ENCODE measurements at regions of chr20 and their contacts with region 1.

Region 1: GRCh38 chr20:49510562-49511122 is 28.2 kb upstream of the KCNB1 start:
- DNase-seq: no peak
- CTCF ChIP-seq: no peak

Region 2: GRCh38 chr20:49338061-49338460 is 172.6 kb before region 1 on chr20:
- in situ Hi-C with region 1: loop called (anchors 10 kb)
- DNase-seq: no peak
- CTCF ChIP-seq: no peak

Region 3: GRCh38 chr20:49603209-49603627 is 92.6 kb after region 1 on chr20:
- in situ Hi-C with region 1: no loop called
- DNase-seq: no peak
- CTCF ChIP-seq: peak; percentile 18